SK-N-SH (cell line): ENCODE measurements at regions of chr1 and their contacts with region 1.

Region 1: GRCh38 chr1:50271968-50272578 is 151.2 kb downstream of the DMRTA2 start:
- DNase-seq: peak; percentile 65
- H3K4me3 ChIP-seq: no peak overlapping the region; a peak in 1 of 4 replicates
- H3K27ac ChIP-seq: peak overlapping the region in 1 of 2 experiments; percentile 100; a peak in 3 of 4 replicates
- H3K4me1 ChIP-seq: peaks cover 0 to 64% of the 10 kb centered on the region in 2 experiments; a peak in 2 of 4 replicates
- H3K27me3 ChIP-seq: no peaks in the 10 kb centered on the region
- CTCF ChIP-seq: peak; percentile 73
- EP300 ChIP-seq: no peak
- RAD21 ChIP-seq: peak; percentile 82

Region 2: GRCh38 chr1:50047916-50048694 is 224.0 kb before region 1 on chr1:
- CTCF ChIA-PET with region 1: interaction called, 12 read pairs
- POLR2A ChIA-PET with region 1: interaction called, 4 read pairs
- DNase-seq: peak; percentile 87
- H3K4me3 ChIP-seq: peak overlapping the region; percentile 53 to 61
- H3K27ac ChIP-seq: peak overlapping the region in 1 of 2 experiments; percentile 43; a peak in 1 of 4 replicates
- H3K4me1 ChIP-seq: no peaks in the 10 kb centered on the region; a peak in 1 of 4 replicates
- H3K27me3 ChIP-seq: no peaks in the 10 kb centered on the region; the same call in 1 of the 2 replicates
- CTCF ChIP-seq: peak; percentile 46
- EP300 ChIP-seq: no peak
- RAD21 ChIP-seq: peak; percentile 54

Region 3: DNA sequence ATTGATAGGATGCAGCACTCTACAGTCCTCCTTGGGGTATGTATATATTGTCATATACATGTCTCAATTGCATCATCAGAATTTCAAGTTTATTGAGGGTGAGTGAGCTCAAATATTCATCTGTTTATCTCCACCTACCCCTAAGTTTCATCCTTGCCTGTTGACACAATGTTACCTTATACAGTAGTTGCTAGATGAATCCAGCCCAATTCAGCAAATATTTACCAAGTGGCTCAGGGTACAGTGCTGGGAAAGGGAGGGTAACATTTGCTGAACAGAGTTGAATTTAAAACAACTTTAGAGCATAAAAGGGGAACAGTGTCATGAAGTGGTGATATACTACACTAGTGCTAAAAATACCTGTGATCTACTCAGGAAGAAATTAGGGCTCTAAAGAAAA is 149.0 kb before region 1 on chr1:
- CTCF ChIA-PET with region 1: interaction called, 13 read pairs
- POLR2A ChIA-PET with region 1: no interaction called
- DNase-seq: no peak
- H3K4me3 ChIP-seq: no peak overlapping the region
- H3K27ac ChIP-seq: no peak overlapping the region; a peak in 1 of 4 replicates
- H3K4me1 ChIP-seq: peaks cover 0 to 22% of the 10 kb centered on the region in 2 experiments; a peak in 2 of 4 replicates
- H3K27me3 ChIP-seq: no peaks in the 10 kb centered on the region
- CTCF ChIP-seq: no peak
- EP300 ChIP-seq: no peak
- RAD21 ChIP-seq: no peak

Region 4: DNA sequence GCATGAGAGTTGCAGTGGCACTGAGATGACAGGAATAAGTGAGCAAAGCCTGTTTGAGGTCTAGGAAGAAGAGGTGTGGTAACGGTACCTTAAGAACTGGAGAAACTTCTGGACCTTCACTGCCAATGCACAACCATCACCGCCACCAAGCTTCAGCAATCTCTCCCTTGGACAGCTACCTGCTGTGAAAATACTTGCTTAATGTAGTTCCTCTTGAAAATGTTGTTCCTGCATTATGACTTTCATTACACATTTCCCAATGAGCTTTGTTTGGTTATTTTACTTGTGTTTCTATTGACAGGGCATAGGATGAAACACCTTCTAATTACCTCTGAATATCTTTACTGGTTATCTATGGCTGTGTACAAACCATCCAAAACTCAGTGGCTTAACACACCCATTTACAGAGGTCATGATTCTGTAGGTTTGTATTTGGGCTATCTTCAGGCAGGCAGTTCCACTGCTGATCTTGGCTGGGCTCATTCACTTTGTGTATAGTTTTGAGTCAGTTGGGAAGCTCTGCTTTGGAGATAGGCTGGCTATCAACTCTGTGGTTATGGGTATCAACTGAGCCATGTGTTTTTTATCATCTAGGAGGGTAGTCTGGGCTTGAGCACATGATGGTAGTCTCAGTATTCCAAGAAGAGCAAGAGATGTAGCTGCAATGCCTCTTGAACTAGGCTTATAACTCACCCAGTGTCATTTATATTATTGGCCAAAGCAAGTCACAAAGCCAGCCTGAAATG is 14.0 kb before region 1 on chr1:
- CTCF ChIA-PET with region 1: interaction called, 16 read pairs
- POLR2A ChIA-PET with region 1: no interaction called
- DNase-seq: no peak
- H3K4me3 ChIP-seq: no peak overlapping the region
- H3K27ac ChIP-seq: no peak overlapping the region
- H3K4me1 ChIP-seq: peaks cover 0 to 5% of the 10 kb centered on the region in 2 experiments; a peak in 1 of 4 replicates
- H3K27me3 ChIP-seq: no peaks in the 10 kb centered on the region
- CTCF ChIP-seq: no peak
- EP300 ChIP-seq: no peak
- RAD21 ChIP-seq: no peak

Region 5: GRCh38 chr1:50326026-50326425 is 54.0 kb after region 1 on chr1:
- CTCF ChIA-PET with region 1: interaction called, 100 read pairs
- POLR2A ChIA-PET with region 1: no interaction called
- DNase-seq: no peak
- H3K4me3 ChIP-seq: no peak overlapping the region
- H3K27ac ChIP-seq: no peak overlapping the region
- H3K4me1 ChIP-seq: peaks cover 0 to 24% of the 10 kb centered on the region in 2 experiments; a peak in 2 of 4 replicates
- H3K27me3 ChIP-seq: no peaks in the 10 kb centered on the region
- CTCF ChIP-seq: no peak
- EP300 ChIP-seq: no peak
- RAD21 ChIP-seq: no peak

Region 6: GRCh38 chr1:50348449-50349241 is 76.6 kb after region 1 on chr1:
- CTCF ChIA-PET with region 1: interaction called, 38 read pairs
- POLR2A ChIA-PET with region 1: interaction called, 15 read pairs
- DNase-seq: peak; percentile 77
- H3K4me3 ChIP-seq: no peak overlapping the region
- H3K27ac ChIP-seq: peak overlapping the region in 1 of 2 experiments; percentile 48; a peak in 1 of 4 replicates
- H3K4me1 ChIP-seq: peaks cover 0 to 23% of the 10 kb centered on the region in 2 experiments; a peak in 2 of 4 replicates
- H3K27me3 ChIP-seq: no peaks in the 10 kb centered on the region
- CTCF ChIP-seq: peak; percentile 82
- EP300 ChIP-seq: peak in 1 of 2 experiments; percentile 30; a peak in 1 of 4 replicates
- RAD21 ChIP-seq: peak; percentile 99

Region 7: GRCh38 chr1:50424045-50424883 is 152.2 kb after region 1 on chr1:
- CTCF ChIA-PET with region 1: no interaction called
- POLR2A ChIA-PET with region 1: no interaction called
- DNase-seq: peak; percentile 54
- H3K4me3 ChIP-seq: peak overlapping the region in 1 of 2 experiments; percentile 47; a peak in 2 of 4 replicates
- H3K27ac ChIP-seq: no peak overlapping the region
- H3K4me1 ChIP-seq: peaks cover 11 to 24% of the 10 kb centered on the region in 2 experiments; a peak in 1 of 4 replicates
- H3K27me3 ChIP-seq: peaks cover 98% of the 10 kb centered on the region
- CTCF ChIP-seq: no peak
- EP300 ChIP-seq: no peak
- RAD21 ChIP-seq: no peak